A673 (cell line): ENCODE measurements at regions of chr11 and their contacts with region 1.

Region 1: GRCh38 chr11:49995565-49995964 is 13.2 kb upstream of the OR4C12 start:
- DNase-seq: peak; percentile 96
- H3K4me3 ChIP-seq: no peak overlapping the region
- H3K27ac ChIP-seq: no peak overlapping the region
- H3K4me1 ChIP-seq: no peaks in the 10 kb centered on the region
- H3K27me3 ChIP-seq: no peaks in the 10 kb centered on the region
- CTCF ChIP-seq: peak; percentile 95

Region 2: DNA sequence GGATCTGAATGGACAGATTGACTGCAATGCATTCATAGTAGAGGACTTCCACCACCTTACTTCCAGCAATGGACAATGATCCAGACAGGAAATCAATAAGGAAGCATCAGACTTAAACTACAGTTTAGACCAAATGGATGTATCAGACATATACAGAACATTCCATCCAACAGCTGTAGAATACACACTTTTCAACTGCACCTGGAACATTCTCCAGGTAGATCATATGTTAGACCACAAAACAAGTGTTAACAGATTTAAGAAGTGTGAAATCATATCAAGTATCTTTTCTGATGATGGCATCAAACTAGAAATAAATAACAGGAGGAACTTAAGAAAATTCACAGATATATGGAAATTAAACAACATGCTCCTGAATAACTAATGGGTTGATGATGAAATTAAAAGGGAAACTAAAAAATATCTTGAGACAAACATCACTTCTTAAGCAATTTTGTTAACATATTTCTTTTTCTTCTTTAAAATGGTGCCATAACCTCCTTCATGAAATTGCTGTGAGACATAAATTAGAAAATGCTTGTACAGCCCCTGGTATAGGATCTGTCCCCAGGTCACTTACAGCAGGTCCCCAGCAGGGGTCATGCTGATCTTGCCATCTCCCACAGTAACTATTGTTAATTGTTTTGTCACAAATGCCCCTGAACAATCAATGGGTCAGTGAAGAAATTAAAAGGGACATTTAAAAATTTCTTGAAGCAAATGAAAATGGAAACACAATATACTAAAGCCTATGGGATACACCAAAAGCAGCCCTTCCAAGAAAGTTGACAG is 1878.9 kb before region 1 on chr11:
- CTCF ChIA-PET with region 1: no interaction called
- POLR2A ChIA-PET with region 1: no interaction called
- intact Hi-C with region 1: loop called (anchors 10 kb)
- DNase-seq: peak; percentile 50
- H3K4me3 ChIP-seq: no peak overlapping the region
- H3K27ac ChIP-seq: no peak overlapping the region
- H3K4me1 ChIP-seq: no peaks in the 10 kb centered on the region
- H3K27me3 ChIP-seq: no peaks in the 10 kb centered on the region
- CTCF ChIP-seq: peak; percentile 62

Region 3: GRCh38 chr11:48172818-48173609 is 1822.6 kb before region 1 on chr11:
- CTCF ChIA-PET with region 1: interaction called, 3 read pairs
- POLR2A ChIA-PET with region 1: no interaction called
- intact Hi-C with region 1: loop called (anchors 5 kb)
- DNase-seq: peak; percentile 88
- H3K4me3 ChIP-seq: peak overlapping the region; percentile 0
- H3K27ac ChIP-seq: no peak overlapping the region
- H3K4me1 ChIP-seq: no peaks in the 10 kb centered on the region
- H3K27me3 ChIP-seq: no peaks in the 10 kb centered on the region
- CTCF ChIP-seq: peak; percentile 100

Region 4: GRCh38 chr11:48210052-48210451 is 1785.5 kb before region 1 on chr11:
- CTCF ChIA-PET with region 1: no interaction called
- POLR2A ChIA-PET with region 1: no interaction called
- intact Hi-C with region 1: loop called (anchors 10 kb)
- DNase-seq: peak; percentile 21
- H3K4me3 ChIP-seq: no peak overlapping the region
- H3K27ac ChIP-seq: no peak overlapping the region
- H3K4me1 ChIP-seq: no peaks in the 10 kb centered on the region
- H3K27me3 ChIP-seq: peaks cover 28% of the 10 kb centered on the region
- CTCF ChIP-seq: peak; percentile 22; the same call in 1 of the 2 replicates

Region 5: DNA sequence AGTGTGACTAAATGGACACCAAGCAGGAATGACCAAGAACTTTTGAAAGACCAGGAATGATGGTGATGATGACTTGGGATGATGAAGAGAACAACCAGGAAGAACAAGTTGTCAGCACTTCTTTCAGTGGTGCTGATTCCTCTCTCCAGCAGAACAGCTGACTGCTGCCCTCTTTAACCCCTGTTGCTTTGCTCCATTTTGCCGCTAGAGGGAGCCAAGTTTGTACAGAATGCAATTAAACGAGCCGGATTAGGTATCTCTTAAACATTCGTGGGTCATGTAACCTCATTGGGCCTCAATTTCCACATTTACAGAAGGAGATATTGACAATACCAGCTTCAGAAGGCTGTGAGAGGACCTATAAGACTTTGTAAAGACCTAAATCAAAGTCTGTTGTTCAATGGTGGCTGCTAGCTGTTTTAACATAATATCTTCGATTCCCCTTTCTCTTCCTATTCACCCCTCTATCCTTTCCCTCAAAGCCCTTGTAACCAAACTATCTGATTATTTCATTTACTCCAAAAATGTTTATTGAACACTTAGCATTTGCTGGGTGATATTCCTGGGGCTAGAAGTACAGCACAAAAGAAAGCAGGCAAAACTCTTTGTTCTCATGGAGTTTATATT is 1687.7 kb before region 1 on chr11:
- CTCF ChIA-PET with region 1: no interaction called
- POLR2A ChIA-PET with region 1: no interaction called
- intact Hi-C with region 1: loop called (anchors 5 kb)
- DNase-seq: peak; percentile 91
- H3K4me3 ChIP-seq: no peak overlapping the region
- H3K27ac ChIP-seq: no peak overlapping the region
- H3K4me1 ChIP-seq: no peaks in the 10 kb centered on the region
- H3K27me3 ChIP-seq: no peaks in the 10 kb centered on the region
- CTCF ChIP-seq: peak; percentile 100

Region 6: DNA sequence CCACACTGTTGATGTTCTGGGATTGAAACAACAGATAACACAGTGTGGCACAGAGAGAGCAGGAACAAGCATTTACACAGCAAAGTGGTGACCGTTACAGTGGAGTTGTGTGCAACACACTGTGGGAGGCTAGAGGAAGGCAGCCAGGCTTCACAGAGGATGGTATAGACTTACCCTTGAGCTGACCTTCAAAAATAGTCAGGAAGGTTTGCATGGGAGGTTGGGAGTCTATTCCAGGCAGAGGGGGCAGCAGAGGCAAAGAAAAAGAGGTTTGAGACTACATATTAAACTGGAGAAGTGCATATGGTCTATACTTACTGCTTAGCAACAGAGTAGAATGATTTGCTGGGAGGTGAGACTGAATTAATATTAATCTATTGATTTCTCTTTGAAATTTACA is 765.1 kb before region 1 on chr11:
- CTCF ChIA-PET with region 1: interaction called, 3 read pairs
- POLR2A ChIA-PET with region 1: no interaction called
- intact Hi-C with region 1: loop called (anchors 2 kb)
- DNase-seq: peak; percentile 42
- H3K4me3 ChIP-seq: no peak overlapping the region
- H3K27ac ChIP-seq: no peak overlapping the region
- H3K4me1 ChIP-seq: peaks cover 10% of the 10 kb centered on the region
- H3K27me3 ChIP-seq: no peaks in the 10 kb centered on the region
- CTCF ChIP-seq: 0 out of 2 replicates have a peak, but pooled peaks have one; percentile 18

Region 7: GRCh38 chr11:49533204-49533603 is 462.4 kb before region 1 on chr11:
- CTCF ChIA-PET with region 1: no interaction called
- POLR2A ChIA-PET with region 1: no interaction called
- intact Hi-C with region 1: loop called (anchors 5 kb)
- DNase-seq: no peak
- H3K4me3 ChIP-seq: no peak overlapping the region
- H3K27ac ChIP-seq: no peak overlapping the region
- H3K4me1 ChIP-seq: no peaks in the 10 kb centered on the region
- H3K27me3 ChIP-seq: no peaks in the 10 kb centered on the region
- CTCF ChIP-seq: no peak